HEK293 (cell line): ENCODE measurements at regions of chr1 and their contacts with region 1.

Region 1: DNA sequence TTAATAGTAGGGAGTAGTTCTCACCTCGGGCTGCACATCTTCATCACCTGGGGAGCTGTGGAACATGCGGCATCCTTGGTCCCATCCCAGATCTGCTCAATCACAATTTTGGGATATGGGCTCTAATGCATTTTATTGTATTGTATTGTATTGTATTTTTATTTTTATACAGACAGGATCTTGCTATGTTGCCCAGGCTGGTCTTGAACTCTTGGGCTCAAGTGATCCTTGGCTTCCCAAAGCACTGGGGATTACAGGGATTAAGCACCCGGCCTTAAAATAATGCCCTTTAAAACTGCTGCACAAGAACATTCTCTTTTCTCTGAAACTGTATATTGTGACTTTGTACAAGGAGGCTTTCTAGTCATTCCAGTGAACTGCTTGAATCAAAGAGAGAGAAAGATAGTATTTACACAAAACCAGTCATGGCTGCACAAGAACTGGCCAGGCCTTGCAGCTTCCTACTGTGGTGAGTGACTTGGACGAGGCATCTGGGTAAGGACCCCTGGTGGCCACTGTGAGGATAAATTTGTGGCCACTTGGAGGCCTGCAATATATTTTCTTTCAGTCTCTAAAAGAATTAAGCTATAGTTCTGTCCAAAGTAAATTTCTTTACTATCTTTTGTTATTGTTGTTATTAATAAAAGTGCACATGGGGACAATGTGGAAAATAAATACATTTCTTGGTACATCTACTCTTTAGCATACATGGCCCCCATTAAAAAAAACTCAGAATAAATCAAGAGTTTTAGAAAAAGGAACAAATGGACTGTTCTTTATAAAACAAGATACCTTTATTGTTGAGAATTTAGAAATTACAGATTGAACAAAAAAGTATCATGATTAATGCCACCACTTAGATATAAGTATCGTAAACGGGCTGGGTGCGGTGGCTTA is 48.0 kb downstream of the TBCE start:
- H3K4me3 ChIP-seq: no peak overlapping the region
- H3K27ac ChIP-seq: no peak overlapping the region
- H3K4me1 ChIP-seq: no peaks in the 10 kb centered on the region; the same call in 1 of the 2 replicates
- CTCF ChIP-seq: peak; percentile 78

Region 2: DNA sequence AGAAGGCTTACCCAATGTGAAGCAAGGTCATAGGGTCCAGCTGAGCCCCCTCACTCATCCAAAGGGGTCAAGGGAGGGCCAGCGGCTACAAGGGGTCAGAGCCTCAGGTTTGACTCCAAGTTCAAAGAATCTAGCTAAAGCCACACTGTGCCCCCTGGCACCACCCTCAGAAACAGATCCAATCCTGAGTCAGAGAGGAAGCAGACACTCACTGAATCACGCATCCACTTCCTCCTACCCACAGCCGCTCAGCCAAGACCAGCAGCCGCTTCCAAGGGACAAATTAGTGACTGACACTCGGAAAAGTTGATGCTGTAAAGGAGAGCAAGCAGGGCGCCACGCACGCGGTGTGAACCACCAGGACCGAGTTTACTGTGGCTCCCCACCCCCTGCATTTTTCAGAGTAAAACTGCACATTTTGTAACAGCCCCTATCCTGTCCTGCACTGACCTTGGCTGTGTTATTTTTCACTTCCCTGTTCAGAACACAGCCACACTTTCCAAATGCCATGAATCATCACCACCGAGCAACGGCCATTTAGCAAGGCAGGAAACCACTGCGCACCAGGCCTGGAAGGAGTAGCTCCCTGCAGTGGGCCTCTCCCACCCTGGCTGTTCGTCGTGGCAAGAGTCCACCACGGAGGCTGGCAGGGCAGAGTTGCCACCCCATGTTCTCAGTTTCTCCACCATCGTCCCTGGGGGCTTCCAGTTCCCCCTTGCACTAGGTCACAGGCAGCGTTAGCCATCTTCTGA is 434.4 kb before region 1 on chr1:
- CTCF ChIA-PET with region 1: no interaction called
- POLR2A ChIA-PET with region 1: no interaction called
- H3K4me3 ChIP-seq: no peak overlapping the region
- H3K27ac ChIP-seq: peak overlapping the region; percentile 4; the same call in 1 of the 2 replicates
- H3K4me1 ChIP-seq: peaks cover 20% of the 10 kb centered on the region
- CTCF ChIP-seq: no peak

Region 3: GRCh38 chr1:235253219-235253962 is 161.9 kb before region 1 on chr1:
- CTCF ChIA-PET with region 1: interaction called, 67 read pairs
- POLR2A ChIA-PET with region 1: interaction called, 4 read pairs
- H3K4me3 ChIP-seq: no peak overlapping the region
- H3K27ac ChIP-seq: no peak overlapping the region
- H3K4me1 ChIP-seq: no peaks in the 10 kb centered on the region
- CTCF ChIP-seq: peak; percentile 82

Region 4: GRCh38 chr1:235298758-235299157 is 116.5 kb before region 1 on chr1:
- CTCF ChIA-PET with region 1: interaction called, 12 read pairs
- POLR2A ChIA-PET with region 1: no interaction called
- H3K4me3 ChIP-seq: no peak overlapping the region
- H3K27ac ChIP-seq: 0 out of 2 replicates have a peak overlapping the region, but pooled peaks have one; percentile 17
- H3K4me1 ChIP-seq: peaks cover 24% of the 10 kb centered on the region
- CTCF ChIP-seq: no peak

Region 5: GRCh38 chr1:235339746-235340445 is 75.4 kb before region 1 on chr1:
- CTCF ChIA-PET with region 1: interaction called, 18 read pairs
- POLR2A ChIA-PET with region 1: no interaction called
- H3K4me3 ChIP-seq: no peak overlapping the region
- H3K27ac ChIP-seq: no peak overlapping the region
- H3K4me1 ChIP-seq: no peaks in the 10 kb centered on the region
- CTCF ChIP-seq: no peak

Region 6: GRCh38 chr1:235391874-235392273 is 23.4 kb before region 1 on chr1:
- CTCF ChIA-PET with region 1: interaction called, 25 read pairs
- POLR2A ChIA-PET with region 1: no interaction called
- H3K4me3 ChIP-seq: no peak overlapping the region
- H3K27ac ChIP-seq: no peak overlapping the region
- H3K4me1 ChIP-seq: no peaks in the 10 kb centered on the region
- CTCF ChIP-seq: no peak

Region 7: GRCh38 chr1:235450886-235451483 is 35.7 kb after region 1 on chr1:
- CTCF ChIA-PET with region 1: interaction called, 11 read pairs
- POLR2A ChIA-PET with region 1: no interaction called
- H3K4me3 ChIP-seq: no peak overlapping the region
- H3K27ac ChIP-seq: no peak overlapping the region
- H3K4me1 ChIP-seq: no peaks in the 10 kb centered on the region
- CTCF ChIP-seq: no peak

Region 8: DNA sequence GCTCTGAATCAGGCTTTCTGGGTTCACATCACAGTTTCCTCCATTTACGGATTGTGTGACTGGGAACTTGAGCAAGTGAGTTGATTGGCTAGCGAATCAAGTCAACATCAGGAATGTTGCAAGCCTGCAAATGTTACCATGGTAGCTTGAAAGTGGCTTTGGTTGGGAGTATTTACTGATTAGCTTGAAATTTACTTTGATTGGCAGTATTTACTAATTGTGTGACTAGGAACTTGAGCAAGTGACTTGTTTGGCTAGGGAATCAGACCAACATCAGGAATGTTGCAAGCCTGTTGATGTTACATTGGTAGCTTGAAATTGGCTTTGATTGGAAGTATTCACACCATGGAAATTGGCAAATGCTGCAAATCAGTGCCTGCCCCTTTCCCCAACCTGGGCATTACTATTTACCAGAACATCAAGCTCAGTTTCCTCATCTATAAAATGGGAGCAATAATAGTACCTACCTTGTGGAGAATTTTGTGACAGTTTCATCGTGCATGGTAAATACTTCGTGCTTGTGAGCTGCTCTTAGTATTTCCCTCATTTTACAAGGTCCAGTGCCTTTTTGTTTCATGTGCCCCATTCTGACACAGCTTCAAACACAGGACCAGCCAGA is 112.0 kb after region 1 on chr1:
- CTCF ChIA-PET with region 1: no interaction called
- POLR2A ChIA-PET with region 1: no interaction called
- H3K4me3 ChIP-seq: no peak overlapping the region
- H3K27ac ChIP-seq: no peak overlapping the region
- H3K4me1 ChIP-seq: no peaks in the 10 kb centered on the region
- CTCF ChIP-seq: no peak

Region 9: DNA sequence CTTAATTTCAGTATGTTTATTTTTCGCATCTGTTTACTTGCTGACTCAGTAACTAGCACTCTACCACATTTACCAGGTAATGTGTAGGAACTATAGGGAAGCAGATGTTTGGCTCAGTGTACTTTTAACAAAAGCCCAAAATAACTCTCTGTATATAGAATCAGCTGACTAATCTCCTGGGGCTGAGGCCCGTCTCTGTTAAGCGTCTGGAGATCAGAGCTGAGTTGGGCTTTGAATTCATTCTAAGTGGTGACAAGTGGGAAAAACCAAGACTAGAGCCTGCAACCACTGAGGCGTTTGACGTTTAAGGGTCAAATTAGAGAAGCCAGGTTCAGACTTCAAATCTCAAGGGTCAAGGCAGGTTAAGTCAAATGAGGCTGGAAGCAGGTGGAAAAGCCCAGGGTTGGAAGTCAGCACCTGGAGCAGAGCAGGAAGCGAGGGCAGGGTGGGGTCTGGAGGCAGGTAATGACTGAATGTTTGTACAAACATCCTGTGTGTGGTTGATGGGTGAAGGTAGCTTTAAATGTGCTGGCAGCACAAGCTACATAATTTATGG is 508.3 kb after region 1 on chr1:
- CTCF ChIA-PET with region 1: no interaction called
- POLR2A ChIA-PET with region 1: no interaction called
- H3K4me3 ChIP-seq: no peak overlapping the region
- H3K27ac ChIP-seq: no peak overlapping the region
- H3K4me1 ChIP-seq: peaks cover 11% of the 10 kb centered on the region
- CTCF ChIP-seq: no peak